Mammary epithelial cell (primary cell): ENCODE measurements at regions of chr14 and their contacts with region 1.

Region 1: DNA sequence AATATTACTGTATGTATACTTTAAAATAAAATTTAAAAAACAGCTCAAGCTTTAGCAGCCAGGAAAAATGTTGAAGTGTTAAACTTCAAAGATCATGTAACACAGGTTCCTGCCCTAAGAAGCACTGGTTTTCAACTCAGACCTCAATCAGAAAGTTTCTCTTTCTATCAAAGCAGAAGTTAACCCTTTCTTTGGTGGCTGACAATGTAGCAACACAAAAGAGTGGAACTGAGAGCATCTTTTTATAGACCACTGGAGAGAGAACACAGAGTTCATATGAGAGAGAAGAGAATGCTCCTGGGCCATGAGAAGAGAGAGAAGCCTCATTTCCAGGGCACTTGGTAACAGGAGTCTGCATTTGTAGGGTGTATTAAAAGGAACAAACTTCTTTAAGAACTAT is 42.2 kb upstream of the KTN1 start:
- DNase-seq: no peak
- H3K4me3 ChIP-seq: no peak overlapping the region
- H3K27ac ChIP-seq: no peak overlapping the region
- H3K4me1 ChIP-seq: peaks cover 34% of the 10 kb centered on the region
- H3K27me3 ChIP-seq: no peaks in the 10 kb centered on the region
- CTCF ChIP-seq: no peak

Region 2: GRCh38 chr14:55373784-55374705 is 163.7 kb before region 1 on chr14:
- CTCF ChIA-PET with region 1: no interaction called
- dilution Hi-C with region 1: no loop called
- in situ Hi-C with region 1: no loop called
- intact Hi-C with region 1: no loop called
- DNase-seq: peak; percentile 55
- H3K4me3 ChIP-seq: no peak overlapping the region
- H3K27ac ChIP-seq: no peak overlapping the region
- H3K4me1 ChIP-seq: no peaks in the 10 kb centered on the region
- H3K27me3 ChIP-seq: no peaks in the 10 kb centered on the region
- CTCF ChIP-seq: no peak

Region 3: GRCh38 chr14:55572578-55572977 is 34.8 kb after region 1 on chr14:
- CTCF ChIA-PET with region 1: no interaction called
- dilution Hi-C with region 1: no loop called
- in situ Hi-C with region 1: no loop called
- intact Hi-C with region 1: loop called (anchors 2 kb)
- DNase-seq: no peak
- H3K4me3 ChIP-seq: no peak overlapping the region
- H3K27ac ChIP-seq: no peak overlapping the region
- H3K4me1 ChIP-seq: no peaks in the 10 kb centered on the region
- H3K27me3 ChIP-seq: no peaks in the 10 kb centered on the region
- CTCF ChIP-seq: no peak